MCF 10A (cell line): ENCODE measurements at regions of chr17 and their contacts with region 1.

Region 1: GRCh38 chr17:72349491-72349995 is 228.7 kb downstream of the SOX9 start:
- DNase-seq: no peak
- H3K4me3 Mint-ChIP-seq: no peak overlapping the region
- H3K27ac Mint-ChIP-seq: peak overlapping the region; percentile 63
- H3K4me1 Mint-ChIP-seq: peaks cover 7% of the 10 kb centered on the region
- H3K27me3 Mint-ChIP-seq: no peaks in the 10 kb centered on the region
- CTCF ChIP-seq: no peak

Region 2: DNA sequence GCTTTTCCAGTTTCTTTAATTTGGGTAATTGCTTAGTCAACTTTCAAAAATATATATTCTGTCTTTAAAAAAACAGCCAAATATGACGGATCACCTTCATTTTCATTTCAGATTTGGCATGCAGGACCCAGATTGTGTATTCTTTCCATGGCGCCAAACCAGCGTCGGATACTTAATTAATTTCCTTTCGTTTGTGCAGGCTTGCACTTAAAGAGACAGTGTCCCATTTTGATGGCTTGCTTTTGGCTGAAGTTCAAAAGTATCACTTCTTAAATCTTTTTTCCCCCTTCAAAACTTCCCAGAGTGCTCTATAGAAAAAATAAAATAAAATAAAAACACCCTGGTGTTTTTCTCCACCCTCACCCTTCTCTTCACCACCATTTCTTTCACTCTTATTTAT is 623.2 kb before region 1 on chr17:
- CTCF ChIA-PET with region 1: no interaction called
- POLR2A ChIA-PET with region 1: no interaction called
- intact Hi-C with region 1: no loop called
- DNase-seq: no peak
- H3K4me3 Mint-ChIP-seq: no peak overlapping the region
- H3K27ac Mint-ChIP-seq: no peak overlapping the region
- H3K4me1 Mint-ChIP-seq: no peaks in the 10 kb centered on the region
- H3K27me3 Mint-ChIP-seq: no peaks in the 10 kb centered on the region
- CTCF ChIP-seq: no peak

Region 3: DNA sequence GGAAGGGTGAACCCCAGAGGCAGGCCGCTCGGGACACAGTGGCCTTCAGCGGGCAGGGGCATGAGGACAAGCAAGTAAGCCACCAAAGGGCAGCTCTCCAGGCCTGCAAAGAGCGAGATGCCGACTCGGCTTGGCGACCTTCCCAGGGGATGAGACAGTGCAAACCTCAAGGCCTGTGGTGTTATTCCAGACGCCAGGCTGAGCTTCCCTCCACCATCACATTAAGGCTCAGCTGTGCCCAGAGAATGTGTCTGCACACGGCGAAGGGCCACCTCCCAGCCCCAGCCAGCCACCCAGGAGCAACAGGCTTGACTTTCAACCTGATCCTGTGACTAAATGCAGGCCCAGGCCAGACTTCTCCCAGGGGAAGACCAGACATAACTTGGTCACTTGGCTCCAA is 22.6 kb after region 1 on chr17:
- CTCF ChIA-PET with region 1: no interaction called
- POLR2A ChIA-PET with region 1: no interaction called
- intact Hi-C with region 1: loop called (anchors 1 kb)
- DNase-seq: no peak
- H3K4me3 Mint-ChIP-seq: no peak overlapping the region
- H3K27ac Mint-ChIP-seq: no peak overlapping the region
- H3K4me1 Mint-ChIP-seq: peaks cover 9% of the 10 kb centered on the region
- H3K27me3 Mint-ChIP-seq: no peaks in the 10 kb centered on the region
- CTCF ChIP-seq: no peak

Region 4: GRCh38 chr17:72465191-72466024 is 115.9 kb after region 1 on chr17:
- CTCF ChIA-PET with region 1: no interaction called
- POLR2A ChIA-PET with region 1: no interaction called
- intact Hi-C with region 1: no loop called
- DNase-seq: peak; percentile 97
- H3K4me3 Mint-ChIP-seq: peak overlapping the region; percentile 63
- H3K27ac Mint-ChIP-seq: no peak overlapping the region
- H3K4me1 Mint-ChIP-seq: peaks cover 50% of the 10 kb centered on the region
- H3K27me3 Mint-ChIP-seq: no peaks in the 10 kb centered on the region
- CTCF ChIP-seq: no peak